ENCODE measurements at regions of chr16 and their contacts with region 1.

Region 1: GRCh38 chr16:15949210-15950160 is at the start of gene ABCC1:
- DNase-seq: peak in 1 of 2 donors; percentile 40
- ATAC-seq: peak; percentile 75 to 82
- H3K4me3 ChIP-seq: peak within 1 kb of the TSS; percentile 74 to 93 (median 86)
- H3K27ac ChIP-seq: peak within 1 kb of the TSS; percentile 91 to 94 (median 92)
- H3K4me1 ChIP-seq: peaks cover 29 to 32% of the 10 kb centered on the region in 2 donors
- H3K27me3 ChIP-seq: no peaks in the 10 kb centered on the region
- CTCF ChIP-seq: peak in 1 of 5 experiments; percentile 14
- POLR2A ChIP-seq: peak; percentile 41 to 51
- total RNA-seq, gene ABCC1: 19.3 to 43.7 (median 26.2) TPM

Region 2: GRCh38 chr16:15857724-15858560 is 91.5 kb before region 1 on chr16:
- in situ Hi-C with region 1: no loop called
- intact Hi-C with region 1: no loop called
- DNase-seq: no peak
- ATAC-seq: no peak
- H3K4me3 ChIP-seq: peak overlapping the region; percentile 39 to 54 (median 50)
- H3K27ac ChIP-seq: peak overlapping the region in 2 of 4 donors; percentile 9 to 61
- H3K4me1 ChIP-seq: peaks cover 15 to 20% of the 10 kb centered on the region in 2 donors
- H3K27me3 ChIP-seq: peaks cover 14 to 22% (median 17%) of the 10 kb centered on the region in 3 donors
- CTCF ChIP-seq: no peak
- POLR2A ChIP-seq: no peak

Region 3: DNA sequence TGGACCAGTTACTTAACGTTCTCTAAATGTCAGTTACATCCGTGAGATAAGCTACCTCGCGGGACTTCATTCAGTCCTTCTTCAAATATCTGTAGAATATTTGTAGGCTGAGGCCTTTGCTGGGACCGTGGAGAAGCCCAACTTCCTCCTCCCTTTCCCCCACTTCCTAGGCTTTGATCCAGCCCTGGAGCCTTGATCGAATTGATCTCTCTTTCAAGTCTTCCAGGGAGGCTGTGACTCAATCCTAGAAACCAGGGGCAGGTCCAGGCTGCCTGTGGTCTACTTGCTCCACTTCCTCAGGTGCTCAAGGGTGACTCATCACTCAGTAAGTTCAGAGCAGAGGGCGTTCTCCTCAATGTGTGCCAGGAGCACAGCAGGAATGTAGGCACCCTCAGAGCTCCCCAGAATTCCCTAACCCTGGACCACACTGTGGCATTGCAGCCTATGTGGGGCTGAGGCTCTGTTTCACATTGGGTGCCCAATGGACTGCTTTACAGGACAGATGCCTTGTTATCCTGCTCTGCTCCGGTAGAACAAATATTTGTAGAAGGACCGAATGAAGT is 49.9 kb before region 1 on chr16:
- in situ Hi-C with region 1: loop called in 1 of 4 experiments (anchors 10 kb)
- intact Hi-C with region 1: loop called (anchors 5 kb)
- DNase-seq: no peak
- ATAC-seq: no peak
- H3K4me3 ChIP-seq: no peak overlapping the region
- H3K27ac ChIP-seq: no peak overlapping the region
- H3K4me1 ChIP-seq: no peaks in the 10 kb centered on the region
- H3K27me3 ChIP-seq: no peaks in the 10 kb centered on the region
- CTCF ChIP-seq: no peak
- POLR2A ChIP-seq: no peak

Region 4: DNA sequence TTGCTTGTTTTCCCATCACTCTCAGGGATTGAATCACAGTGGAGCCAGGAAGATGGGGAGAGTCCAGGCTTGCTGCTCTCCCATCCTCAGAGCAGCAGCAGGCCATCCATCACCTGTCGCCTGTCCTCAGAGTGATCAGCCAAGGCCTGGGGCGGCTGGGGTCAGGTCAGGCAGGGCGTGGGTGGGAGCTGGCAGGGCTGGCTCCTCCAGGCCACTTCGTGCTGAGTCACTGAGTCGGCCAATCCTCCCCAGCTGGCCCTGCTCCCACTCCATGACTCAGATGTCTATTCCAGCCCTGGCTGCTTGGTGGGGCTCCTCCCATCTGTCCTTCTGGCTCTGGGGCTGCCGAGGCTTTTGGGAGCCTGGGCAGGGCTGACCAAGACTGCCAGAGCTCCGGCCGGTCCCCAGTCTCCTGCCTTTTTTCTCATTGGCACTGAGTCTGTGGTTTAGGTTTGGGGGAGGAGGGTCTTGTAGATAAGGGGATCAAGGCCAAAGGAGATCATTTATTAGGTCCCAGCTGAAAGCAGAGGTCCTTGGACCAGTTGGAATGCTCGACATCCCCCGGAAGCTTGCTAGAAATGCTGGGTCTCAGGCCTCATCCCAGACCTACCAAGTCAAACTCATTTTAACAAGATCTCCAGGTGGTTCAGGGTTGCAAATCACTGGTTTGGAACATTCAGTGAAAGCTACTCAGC is 72.7 kb after region 1 on chr16:
- in situ Hi-C with region 1: loop called in 1 of 4 experiments (anchors 10 kb)
- intact Hi-C with region 1: loop called (anchors 1 kb)
- DNase-seq: peak; percentile 98 to 100
- ATAC-seq: peak; percentile 86 to 94
- H3K4me3 ChIP-seq: peak overlapping the region in 3 of 4 donors; percentile 8 to 38 (median 32)
- H3K27ac ChIP-seq: peak overlapping the region; percentile 81 to 95 (median 88)
- H3K4me1 ChIP-seq: peaks cover 22 to 64% of the 10 kb centered on the region in 2 donors
- H3K27me3 ChIP-seq: no peaks in the 10 kb centered on the region
- CTCF ChIP-seq: no peak
- POLR2A ChIP-seq: peak; percentile 46 to 52

Region 5: GRCh38 chr16:16073891-16074881 is 124.7 kb after region 1 on chr16:
- in situ Hi-C with region 1: loop called in 1 of 4 experiments (anchors 25 kb)
- intact Hi-C with region 1: no loop called
- DNase-seq: peak; percentile 50 to 62
- ATAC-seq: peak; percentile 38 to 65
- H3K4me3 ChIP-seq: no peak overlapping the region
- H3K27ac ChIP-seq: peak overlapping the region; percentile 78 to 92 (median 89)
- H3K4me1 ChIP-seq: peaks cover 45 to 53% of the 10 kb centered on the region in 2 donors
- H3K27me3 ChIP-seq: no peaks in the 10 kb centered on the region
- CTCF ChIP-seq: no peak
- POLR2A ChIP-seq: peak in 1 of 2 donors; percentile 57

Region 6: GRCh38 chr16:17346621-17347569 is 1397.4 kb after region 1 on chr16:
- in situ Hi-C with region 1: no loop called
- intact Hi-C with region 1: no loop called
- DNase-seq: no peak
- ATAC-seq: no peak
- H3K4me3 ChIP-seq: no peak overlapping the region
- H3K27ac ChIP-seq: peak overlapping the region in 1 of 4 donors; percentile 9
- H3K4me1 ChIP-seq: peaks cover 14 to 16% of the 10 kb centered on the region in 2 donors
- H3K27me3 ChIP-seq: no peaks in the 10 kb centered on the region
- CTCF ChIP-seq: no peak
- POLR2A ChIP-seq: no peak

Measured in gastrocnemius medialis (tissue), 4 donors.